CD4-positive, alpha-beta memory T cell (primary cell): ENCODE measurements at regions of chr1 and their contacts with region 1.

Region 1: GRCh38 chr1:244970661-244971551 is 106.6 kb upstream of the HNRNPU start:
- DNase-seq: peak; percentile 95 to 97 (median 96)
- H3K4me3 ChIP-seq: peak overlapping the region; percentile 85 to 95
- H3K4me3 Mint-ChIP-seq: peak overlapping the region; percentile 87 to 98 (median 94)
- H3K27ac ChIP-seq: peak overlapping the region; percentile 100
- H3K27ac Mint-ChIP-seq: peak overlapping the region; percentile 95 to 99 (median 99)
- H3K4me1 ChIP-seq: peaks cover 20% of the 10 kb centered on the region
- H3K4me1 Mint-ChIP-seq: peaks cover 12 to 31% (median 18%) of the 10 kb centered on the region in 4 donors
- H3K27me3 ChIP-seq: no peaks in the 10 kb centered on the region
- H3K27me3 Mint-ChIP-seq: no peaks in the 10 kb centered on the region

Region 2: DNA sequence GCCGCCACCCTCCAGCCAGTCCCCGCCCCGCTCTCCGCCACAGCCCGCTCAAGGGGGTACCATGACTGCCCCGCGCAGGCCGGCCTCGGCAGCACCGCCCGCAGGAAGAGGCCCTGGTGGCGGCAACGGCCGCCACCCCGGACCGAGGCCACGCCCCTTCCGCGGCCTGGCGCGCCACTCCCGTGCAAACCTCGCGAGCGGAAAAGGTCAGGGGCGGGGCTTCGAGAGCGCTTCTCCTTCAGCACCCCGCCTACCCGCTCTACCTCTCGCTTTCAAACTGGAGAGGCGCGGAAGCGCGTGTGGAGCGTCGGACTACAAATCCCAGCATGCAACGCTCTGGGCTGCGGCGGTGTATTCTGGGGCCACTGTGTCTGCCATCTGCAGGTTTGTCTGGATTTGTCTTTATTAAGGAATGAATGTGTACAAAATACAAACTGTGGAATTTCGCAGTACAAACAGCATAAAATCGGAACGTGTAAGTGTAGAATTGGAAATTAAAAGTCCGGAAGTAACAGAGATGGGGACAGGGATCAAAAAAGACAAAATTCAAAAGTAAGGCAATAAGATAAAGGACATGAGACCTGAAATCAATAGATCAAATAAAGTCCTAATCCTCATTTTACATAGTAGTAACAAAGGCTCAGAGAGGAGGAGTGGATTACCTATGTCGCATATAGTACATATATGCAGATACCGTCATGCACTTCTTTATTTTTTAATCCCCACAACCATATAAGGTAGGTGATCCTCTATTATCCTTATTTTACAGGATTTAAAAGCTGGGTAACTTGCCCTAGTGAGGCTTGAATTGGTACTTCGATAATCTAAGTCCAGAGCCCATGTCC is 518.7 kb before region 1 on chr1:
- CTCF ChIA-PET with region 1: no interaction called
- POLR2A ChIA-PET with region 1: interaction called, 7 read pairs
- intact Hi-C with region 1: loop called (anchors 1 kb)
- DNase-seq: peak; percentile 98 to 99 (median 99)
- H3K4me3 ChIP-seq: peak overlapping the region in 1 of 2 donors; percentile 95
- H3K4me3 Mint-ChIP-seq: peak overlapping the region; percentile 87 to 97 (median 92)
- H3K27ac ChIP-seq: peak overlapping the region; percentile 94
- H3K27ac Mint-ChIP-seq: peak overlapping the region; percentile 87 to 100 (median 95)
- H3K4me1 ChIP-seq: peaks cover 39% of the 10 kb centered on the region
- H3K4me1 Mint-ChIP-seq: peaks cover 31 to 48% (median 35%) of the 10 kb centered on the region in 4 donors
- H3K27me3 ChIP-seq: no peaks in the 10 kb centered on the region
- H3K27me3 Mint-ChIP-seq: no peaks in the 10 kb centered on the region

Region 3: DNA sequence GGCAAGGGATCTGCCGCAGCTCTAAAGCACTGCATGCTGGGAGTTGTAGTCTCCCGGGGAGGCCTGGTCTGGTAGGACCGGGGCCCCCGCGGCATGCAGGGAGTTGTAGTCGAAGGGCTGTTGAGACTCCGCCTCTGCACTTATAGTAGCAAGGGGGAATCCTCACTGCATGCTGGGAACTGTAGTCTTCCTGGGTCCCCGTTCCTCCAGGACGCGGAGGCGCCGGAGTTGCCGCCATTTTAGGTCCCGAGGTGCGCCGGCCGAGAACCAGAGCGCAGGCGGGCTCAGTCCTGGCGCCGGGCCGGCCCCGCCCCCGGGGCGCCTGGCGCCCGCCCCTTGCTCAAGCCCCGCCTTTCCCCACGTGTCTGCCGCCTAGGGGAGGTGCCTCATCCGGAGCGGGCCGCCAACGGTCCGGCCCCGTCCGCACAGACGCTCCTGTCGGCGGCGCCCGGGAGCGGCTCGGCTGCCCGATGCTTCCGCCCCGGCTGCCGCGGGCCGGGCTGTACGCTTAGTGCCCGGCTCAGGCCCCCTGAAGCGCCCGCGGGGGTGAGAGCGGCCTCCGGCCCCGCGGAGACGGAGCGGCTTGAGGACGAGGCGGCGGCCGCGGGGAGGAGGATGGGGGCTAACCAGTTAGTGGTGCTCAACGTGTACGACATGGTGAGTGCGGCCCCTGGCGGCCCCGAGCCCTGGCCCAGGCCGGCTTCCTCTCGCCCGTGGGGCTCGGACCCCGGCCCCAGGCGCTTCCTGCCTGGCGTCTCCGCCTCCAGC is 318.0 kb before region 1 on chr1 and contains the start of gene DESI2:
- CTCF ChIA-PET with region 1: interaction called, 4 read pairs
- POLR2A ChIA-PET with region 1: interaction called, 28 read pairs
- intact Hi-C with region 1: loop called (anchors 1 kb)
- DNase-seq: peak; percentile 97 to 100 (median 99)
- H3K4me3 ChIP-seq: peak within 1 kb of the TSS; percentile 61 to 73
- H3K4me3 Mint-ChIP-seq: peak within 1 kb of the TSS; percentile 80 to 91 (median 86)
- H3K27ac ChIP-seq: peak within 1 kb of the TSS; percentile 89
- H3K27ac Mint-ChIP-seq: peak within 1 kb of the TSS; percentile 43 to 95 (median 93)
- H3K4me1 ChIP-seq: peaks cover 43% of the 10 kb centered on the region
- H3K4me1 Mint-ChIP-seq: peaks cover 21 to 24% (median 22%) of the 10 kb centered on the region in 4 donors
- H3K27me3 ChIP-seq: no peaks in the 10 kb centered on the region
- H3K27me3 Mint-ChIP-seq: no peaks in the 10 kb centered on the region
- total RNA-seq, gene DESI2: 21.1 to 22.8 TPM

Region 4: GRCh38 chr1:244854865-244855578 is 115.9 kb before region 1 on chr1:
- CTCF ChIA-PET with region 1: interaction called, 3 read pairs
- POLR2A ChIA-PET with region 1: interaction called, 356 read pairs
- intact Hi-C with region 1: no loop called
- DNase-seq: no peak
- H3K4me3 ChIP-seq: no peak overlapping the region
- H3K4me3 Mint-ChIP-seq: peak overlapping the region; percentile 0 to 74 (median 64)
- H3K27ac ChIP-seq: peak overlapping the region; percentile 26
- H3K27ac Mint-ChIP-seq: peak overlapping the region; percentile 77 to 97 (median 90)
- H3K4me1 ChIP-seq: peaks cover 95% of the 10 kb centered on the region
- H3K4me1 Mint-ChIP-seq: peaks cover 61 to 95% (median 74%) of the 10 kb centered on the region in 4 donors
- H3K27me3 ChIP-seq: no peaks in the 10 kb centered on the region
- H3K27me3 Mint-ChIP-seq: no peaks in the 10 kb centered on the region

Region 5: GRCh38 chr1:245045087-245045881 is 74.4 kb after region 1 on chr1:
- CTCF ChIA-PET with region 1: interaction called, 18 read pairs
- POLR2A ChIA-PET with region 1: interaction called, 8 read pairs
- intact Hi-C with region 1: loop called (anchors 1 kb)
- DNase-seq: no peak
- H3K4me3 ChIP-seq: no peak overlapping the region
- H3K4me3 Mint-ChIP-seq: no peak overlapping the region
- H3K27ac ChIP-seq: no peak overlapping the region
- H3K27ac Mint-ChIP-seq: peak overlapping the region in 1 of 7 donors; percentile 31
- H3K4me1 ChIP-seq: no peaks in the 10 kb centered on the region
- H3K4me1 Mint-ChIP-seq: peaks cover 0 to 3% (median under 1%) of the 10 kb centered on the region in 4 donors
- H3K27me3 ChIP-seq: no peaks in the 10 kb centered on the region
- H3K27me3 Mint-ChIP-seq: peaks cover 0 to 1% of the 10 kb centered on the region in 2 donors

Region 6: GRCh38 chr1:245290836-245291235 is 319.9 kb after region 1 on chr1:
- CTCF ChIA-PET with region 1: no interaction called
- POLR2A ChIA-PET with region 1: no interaction called
- intact Hi-C with region 1: no loop called
- DNase-seq: no peak
- H3K4me3 ChIP-seq: no peak overlapping the region
- H3K4me3 Mint-ChIP-seq: no peak overlapping the region
- H3K27ac ChIP-seq: no peak overlapping the region
- H3K27ac Mint-ChIP-seq: peak overlapping the region in 1 of 7 donors; percentile 50
- H3K4me1 ChIP-seq: no peaks in the 10 kb centered on the region
- H3K4me1 Mint-ChIP-seq: no peaks in the 10 kb centered on the region
- H3K27me3 ChIP-seq: no peaks in the 10 kb centered on the region
- H3K27me3 Mint-ChIP-seq: peaks cover 2 to 3% of the 10 kb centered on the region in 2 donors

Region 7: GRCh38 chr1:245528258-245528635 is 557.3 kb after region 1 on chr1:
- CTCF ChIA-PET with region 1: no interaction called
- POLR2A ChIA-PET with region 1: no interaction called
- intact Hi-C with region 1: no loop called
- DNase-seq: no peak
- H3K4me3 ChIP-seq: no peak overlapping the region
- H3K4me3 Mint-ChIP-seq: no peak overlapping the region
- H3K27ac ChIP-seq: no peak overlapping the region
- H3K27ac Mint-ChIP-seq: no peak overlapping the region
- H3K4me1 ChIP-seq: no peaks in the 10 kb centered on the region
- H3K4me1 Mint-ChIP-seq: no peaks in the 10 kb centered on the region
- H3K27me3 ChIP-seq: no peaks in the 10 kb centered on the region
- H3K27me3 Mint-ChIP-seq: peaks cover 1 to 7% of the 10 kb centered on the region in 2 donors

Region 8: GRCh38 chr1:246931549-246932365 is 1960.9 kb after region 1 on chr1 and contains the start of gene AHCTF1:
- CTCF ChIA-PET with region 1: no interaction called
- POLR2A ChIA-PET with region 1: no interaction called
- intact Hi-C with region 1: loop called (anchors 2 kb)
- DNase-seq: peak; percentile 95 to 97 (median 96)
- H3K4me3 ChIP-seq: peak within 1 kb of the TSS; percentile 78 to 89
- H3K4me3 Mint-ChIP-seq: peak within 1 kb of the TSS; percentile 93 to 97 (median 95)
- H3K27ac ChIP-seq: peak within 1 kb of the TSS; percentile 76
- H3K27ac Mint-ChIP-seq: peak within 1 kb of the TSS; percentile 96 to 99 (median 97)
- H3K4me1 ChIP-seq: peaks cover 37% of the 10 kb centered on the region
- H3K4me1 Mint-ChIP-seq: peaks cover 22 to 46% (median 34%) of the 10 kb centered on the region in 4 donors
- H3K27me3 ChIP-seq: no peaks in the 10 kb centered on the region
- H3K27me3 Mint-ChIP-seq: no peaks in the 10 kb centered on the region
- total RNA-seq, gene AHCTF1: 55.1 to 59.0 TPM